ENCODE measurements at regions of chr22 and their contacts with region 1.

Region 1: DNA sequence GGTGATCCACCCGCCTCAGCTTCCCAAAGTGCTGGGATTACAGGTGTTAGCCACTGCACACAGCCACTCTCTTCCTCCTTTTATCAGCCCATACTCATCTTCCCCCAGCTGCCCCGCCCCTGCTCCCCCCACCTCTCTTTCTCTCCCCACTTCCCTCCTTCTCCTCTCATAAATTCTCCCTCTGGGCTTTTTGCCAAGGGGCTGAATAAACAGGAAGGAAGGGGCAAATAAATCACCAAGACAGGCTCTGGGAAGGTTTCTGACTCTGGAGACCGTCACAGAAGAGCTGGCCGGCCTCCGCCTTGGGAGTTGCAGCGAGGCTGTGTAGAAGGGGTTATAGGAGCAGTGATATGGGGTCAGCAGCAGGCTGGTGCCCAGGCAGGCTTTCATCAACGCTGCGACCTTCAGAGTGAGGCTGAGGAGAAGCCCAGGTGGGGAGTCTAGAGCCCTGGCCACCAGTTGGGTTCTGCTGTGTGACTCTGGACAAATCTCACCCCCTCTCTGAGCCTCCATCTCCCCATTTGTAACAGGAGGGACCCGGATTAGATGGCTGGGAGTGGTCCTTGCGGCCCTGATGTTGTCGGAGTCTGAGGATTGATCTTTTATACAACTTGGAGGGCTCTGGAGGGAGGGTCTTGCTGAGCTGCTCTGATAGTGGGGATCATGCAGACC is 62.6 kb upstream of the RASD2 start:
- DNase-seq: peak; percentile 72
- H3K4me3 ChIP-seq: no peak overlapping the region
- H3K27ac ChIP-seq: peak overlapping the region; percentile 78 to 91 (median 84)
- H3K4me1 ChIP-seq: peaks cover 28 to 46% (median 45%) of the 10 kb centered on the region in 4 donors
- H3K27me3 ChIP-seq: no peaks in the 10 kb centered on the region
- CTCF ChIP-seq: no peak
- EP300 ChIP-seq: peak; percentile 82
- POLR2A ChIP-seq: no peak

Region 2: GRCh38 chr22:35430897-35431322 is 47.1 kb before region 1 on chr22:
- in situ Hi-C with region 1: no loop called
- intact Hi-C with region 1: no loop called
- DNase-seq: peak; percentile 93
- H3K4me3 ChIP-seq: no peak overlapping the region
- H3K27ac ChIP-seq: peak overlapping the region; percentile 59 to 78 (median 70)
- H3K4me1 ChIP-seq: peaks cover 7 to 17% (median 11%) of the 10 kb centered on the region in 4 donors
- H3K27me3 ChIP-seq: no peaks in the 10 kb centered on the region
- CTCF ChIP-seq: peak; percentile 94 to 100 (median 98)
- EP300 ChIP-seq: peak; percentile 50
- POLR2A ChIP-seq: no peak

Region 3: GRCh38 chr22:35465109-35465701 is 12.8 kb before region 1 on chr22:
- in situ Hi-C with region 1: no loop called
- intact Hi-C with region 1: loop called (anchors 1 kb)
- DNase-seq: peak; percentile 34
- H3K4me3 ChIP-seq: no peak overlapping the region
- H3K27ac ChIP-seq: peak overlapping the region in 1 of 4 donors; percentile 13
- H3K4me1 ChIP-seq: peaks cover 15 to 23% (median 20%) of the 10 kb centered on the region in 4 donors
- H3K27me3 ChIP-seq: no peaks in the 10 kb centered on the region
- CTCF ChIP-seq: no peak
- EP300 ChIP-seq: no peak
- POLR2A ChIP-seq: no peak

Region 4: GRCh38 chr22:35539910-35540594 is 62.0 kb after region 1 on chr22:
- in situ Hi-C with region 1: no loop called
- intact Hi-C with region 1: loop called (anchors 10 kb)
- DNase-seq: peak; percentile 78
- H3K4me3 ChIP-seq: peak overlapping the region; percentile 47 to 79 (median 59)
- H3K27ac ChIP-seq: peak overlapping the region; percentile 65 to 85 (median 75)
- H3K4me1 ChIP-seq: peaks cover 5 to 33% (median 22%) of the 10 kb centered on the region in 4 donors
- H3K27me3 ChIP-seq: peaks cover 20% of the 10 kb centered on the region
- CTCF ChIP-seq: no peak
- EP300 ChIP-seq: no peak
- POLR2A ChIP-seq: no peak

Measured in transverse colon (tissue), 4 donors.